Transverse colon (tissue), 4 donors: ENCODE measurements at regions of chrX and their contacts with region 1.

Region 1: GRCh38 chrX:101759000-101759399 is 99.3 kb upstream of the ARMCX2 start:
- DNase-seq: no peak
- H3K4me3 ChIP-seq: no peak overlapping the region
- H3K27ac ChIP-seq: no peak overlapping the region
- H3K4me1 ChIP-seq: no peaks in the 10 kb centered on the region
- H3K27me3 ChIP-seq: no peaks in the 10 kb centered on the region
- CTCF ChIP-seq: peak; percentile 23 to 41 (median 37)
- EP300 ChIP-seq: no peak
- POLR2A ChIP-seq: no peak

Region 2: DNA sequence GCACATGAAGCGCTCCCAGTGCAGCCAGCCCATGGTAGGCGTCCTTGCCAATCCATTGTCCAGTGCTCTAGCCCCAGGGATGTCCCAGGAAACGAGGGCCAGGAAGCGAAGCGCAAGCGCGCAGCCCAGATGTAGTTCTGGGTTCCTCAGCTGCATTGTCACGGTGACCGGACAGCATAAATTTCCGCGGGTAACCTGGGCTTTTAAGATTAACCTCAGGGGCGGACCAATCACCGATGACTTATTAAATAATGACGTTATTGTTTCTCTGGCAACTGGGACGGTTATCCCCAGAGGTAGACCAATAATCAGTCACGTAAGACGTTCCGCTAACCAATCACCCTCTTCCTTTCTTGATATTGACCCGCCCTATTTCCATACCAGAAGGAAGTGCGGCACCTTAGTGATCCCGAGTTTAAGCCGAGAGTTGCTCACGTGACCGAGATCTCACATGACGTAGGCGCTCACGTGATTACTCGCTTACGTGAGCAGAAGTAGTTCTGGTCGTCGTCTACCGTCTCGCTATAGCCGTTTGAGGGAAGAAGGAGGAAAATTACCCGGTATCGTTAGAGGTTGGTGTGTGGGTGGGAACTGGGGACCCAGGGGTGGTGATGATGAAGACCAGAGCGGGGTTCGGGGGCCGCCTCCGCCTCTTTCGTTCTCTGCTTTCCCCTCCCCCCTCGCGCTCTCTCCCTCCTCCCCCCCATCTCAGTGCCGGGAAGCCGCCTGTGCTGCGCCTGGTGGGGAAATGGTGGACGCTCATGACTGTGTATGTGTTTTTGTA is 351.1 kb before region 1 on chrX and contains the starts of genes GLA and HNRNPH2:
- in situ Hi-C with region 1: loop called in 1 of 4 experiments (anchors 25 kb)
- intact Hi-C with region 1: loop called (anchors 10 kb)
- DNase-seq: peak; percentile 92
- H3K4me3 ChIP-seq: peak within 1 kb of the TSS; percentile 29 to 67 (median 52)
- H3K27ac ChIP-seq: peak within 1 kb of the TSS; percentile 81 to 94 (median 92)
- H3K4me1 ChIP-seq: peaks cover 0 to 31% (median 2%) of the 10 kb centered on the region in 4 donors
- H3K27me3 ChIP-seq: no peaks in the 10 kb centered on the region
- CTCF ChIP-seq: peak in 2 of 5 experiments; percentile 43 to 54
- EP300 ChIP-seq: peak; percentile 34
- POLR2A ChIP-seq: peak; percentile 86
- total RNA-seq, gene GLA: 1.4 to 20.8 (median 13.5) TPM
- total RNA-seq, gene HNRNPH2: 9.7 to 46.1 (median 33.2) TPM

Region 3: GRCh38 chrX:101415180-101416145 is 343.5 kb before region 1 on chrX:
- in situ Hi-C with region 1: loop called in 1 of 4 experiments (anchors 25 kb)
- intact Hi-C with region 1: loop called (anchors 10 kb)
- DNase-seq: no peak
- H3K4me3 ChIP-seq: no peak overlapping the region
- H3K27ac ChIP-seq: peak overlapping the region; percentile 15 to 67 (median 57)
- H3K4me1 ChIP-seq: peaks cover 0 to 35% (median 5%) of the 10 kb centered on the region in 4 donors
- H3K27me3 ChIP-seq: no peaks in the 10 kb centered on the region
- CTCF ChIP-seq: peak; percentile 56 to 86 (median 59)
- EP300 ChIP-seq: no peak
- POLR2A ChIP-seq: no peak

Region 4: GRCh38 chrX:101595739-101596419 is 163.1 kb before region 1 on chrX:
- in situ Hi-C with region 1: loop called in 2 of 4 experiments (anchors 25 kb)
- intact Hi-C with region 1: no loop called
- DNase-seq: no peak
- H3K4me3 ChIP-seq: no peak overlapping the region
- H3K27ac ChIP-seq: no peak overlapping the region
- H3K4me1 ChIP-seq: no peaks in the 10 kb centered on the region
- H3K27me3 ChIP-seq: no peaks in the 10 kb centered on the region
- CTCF ChIP-seq: peak; percentile 46 to 61 (median 47)
- EP300 ChIP-seq: no peak
- POLR2A ChIP-seq: no peak

Region 5: DNA sequence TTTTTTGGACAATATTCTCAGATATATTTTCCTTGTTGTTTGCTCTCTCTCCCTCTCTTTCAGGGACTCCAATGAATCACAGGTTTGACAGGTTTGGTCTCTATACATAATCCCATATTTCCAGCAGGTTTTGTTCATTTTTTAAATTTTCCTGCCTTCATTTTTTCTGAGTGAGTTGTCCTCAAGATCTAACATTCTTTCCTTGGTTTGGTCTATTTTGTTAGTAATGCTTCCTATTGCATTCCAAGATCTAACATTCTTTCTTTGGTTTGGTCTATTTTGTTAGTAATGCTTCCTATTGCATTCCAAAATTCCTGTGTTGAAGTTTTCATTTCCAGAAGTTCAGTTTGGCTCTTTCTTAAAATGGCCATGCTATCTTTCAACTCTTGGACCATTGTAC is 218.1 kb after region 1 on chrX:
- in situ Hi-C with region 1: no loop called
- intact Hi-C with region 1: no loop called
- DNase-seq: no peak
- H3K4me3 ChIP-seq: no peak overlapping the region
- H3K27ac ChIP-seq: no peak overlapping the region
- H3K4me1 ChIP-seq: no peaks in the 10 kb centered on the region
- H3K27me3 ChIP-seq: no peaks in the 10 kb centered on the region
- CTCF ChIP-seq: no peak
- EP300 ChIP-seq: no peak
- POLR2A ChIP-seq: no peak